ENCODE measurements at regions of chr7 and their contacts with region 1.

Region 1: DNA sequence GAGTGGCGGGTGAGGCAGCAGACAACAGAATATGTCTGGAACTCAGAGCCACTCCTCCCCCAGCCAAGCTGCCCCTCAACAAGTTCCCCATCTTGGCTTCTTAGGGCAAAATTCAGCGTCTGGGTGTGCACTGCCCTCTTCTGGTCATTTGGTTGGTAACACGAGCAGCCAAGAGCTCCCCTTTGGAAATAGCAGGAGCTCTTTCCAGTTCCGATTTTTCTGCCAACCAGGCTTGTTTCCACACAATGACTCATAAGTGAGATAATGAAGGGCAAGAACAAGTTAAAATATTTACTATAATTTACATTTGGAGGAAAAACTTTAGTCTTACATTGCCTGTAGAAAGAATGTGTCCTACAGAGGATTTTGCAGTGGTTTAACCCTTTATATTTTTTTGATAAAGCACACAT is 70.5 kb downstream of the ADCYAP1R1 start:
- DNase-seq: peak; percentile 83
- H3K4me3 Mint-ChIP-seq: no peak overlapping the region
- H3K27ac Mint-ChIP-seq: no peak overlapping the region
- H3K4me1 Mint-ChIP-seq: peaks cover 6% of the 10 kb centered on the region
- H3K27me3 Mint-ChIP-seq: peaks cover 34% of the 10 kb centered on the region
- CTCF ChIP-seq: peak; percentile 85

Region 2: GRCh38 chr7:30800785-30801252 is 321.8 kb before region 1 on chr7:
- CTCF ChIA-PET with region 1: interaction called, 33 read pairs
- POLR2A ChIA-PET with region 1: no interaction called
- intact Hi-C with region 1: no loop called
- DNase-seq: peak; percentile 80
- H3K4me3 Mint-ChIP-seq: no peak overlapping the region
- H3K27ac Mint-ChIP-seq: no peak overlapping the region
- H3K4me1 Mint-ChIP-seq: peaks cover 43% of the 10 kb centered on the region
- H3K27me3 Mint-ChIP-seq: no peaks in the 10 kb centered on the region
- CTCF ChIP-seq: peak; percentile 80

Region 3: GRCh38 chr7:30938435-30939316 is 184.0 kb before region 1 on chr7:
- CTCF ChIA-PET with region 1: interaction called, 24 read pairs
- POLR2A ChIA-PET with region 1: interaction called, 3 read pairs
- intact Hi-C with region 1: loop called (anchors 2 kb)
- DNase-seq: peak; percentile 83
- H3K4me3 Mint-ChIP-seq: no peak overlapping the region
- H3K27ac Mint-ChIP-seq: no peak overlapping the region
- H3K4me1 Mint-ChIP-seq: no peaks in the 10 kb centered on the region
- H3K27me3 Mint-ChIP-seq: peaks cover 63% of the 10 kb centered on the region
- CTCF ChIP-seq: peak; percentile 93

Region 4: DNA sequence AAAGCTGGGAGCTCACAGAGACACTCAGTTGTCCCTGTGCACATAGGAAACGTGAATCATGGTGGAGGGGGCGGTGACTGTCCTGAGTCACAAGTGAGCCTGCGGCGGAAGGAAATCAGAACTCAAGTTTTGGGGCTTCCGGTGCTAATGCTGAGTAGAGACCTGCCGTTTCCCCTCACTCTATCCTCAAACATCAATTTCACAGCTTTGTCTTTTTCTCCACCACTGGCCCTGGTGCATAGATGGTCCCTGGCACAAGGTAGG is 48.6 kb before region 1 on chr7:
- CTCF ChIA-PET with region 1: interaction called, 10 read pairs
- POLR2A ChIA-PET with region 1: no interaction called
- intact Hi-C with region 1: no loop called
- DNase-seq: peak; percentile 40
- H3K4me3 Mint-ChIP-seq: no peak overlapping the region
- H3K27ac Mint-ChIP-seq: no peak overlapping the region
- H3K4me1 Mint-ChIP-seq: no peaks in the 10 kb centered on the region
- H3K27me3 Mint-ChIP-seq: peaks cover 40% of the 10 kb centered on the region
- CTCF ChIP-seq: no peak

Region 5: GRCh38 chr7:31106303-31107120 is 16.1 kb before region 1 on chr7:
- CTCF ChIA-PET with region 1: interaction called, 20 read pairs
- POLR2A ChIA-PET with region 1: no interaction called
- intact Hi-C with region 1: no loop called
- DNase-seq: no peak
- H3K4me3 Mint-ChIP-seq: no peak overlapping the region
- H3K27ac Mint-ChIP-seq: no peak overlapping the region
- H3K4me1 Mint-ChIP-seq: no peaks in the 10 kb centered on the region
- H3K27me3 Mint-ChIP-seq: peaks cover 64% of the 10 kb centered on the region
- CTCF ChIP-seq: no peak

Measured in MCF 10A (cell line).